AG04450 (cell line): ENCODE measurements at regions of chr18 and their contacts with region 1.

Region 1: GRCh38 chr18:3869848-3870247 is 419.9 kb downstream of the TGIF1 start:
- DNase-seq: peak; percentile 27
- H3K4me3 ChIP-seq: no peak overlapping the region
- H3K27ac ChIP-seq: no peak overlapping the region
- H3K27me3 ChIP-seq: no peaks in the 10 kb centered on the region
- CTCF ChIP-seq: peak; percentile 61

Region 2: GRCh38 chr18:2395427-2396161 is 1474.3 kb before region 1 on chr18:
- CTCF ChIA-PET with region 1: no interaction called
- POLR2A ChIA-PET with region 1: no interaction called
- DNase-seq: no peak
- H3K4me3 ChIP-seq: no peak overlapping the region
- H3K27ac ChIP-seq: no peak overlapping the region
- H3K27me3 ChIP-seq: no peaks in the 10 kb centered on the region
- CTCF ChIP-seq: no peak

Region 3: GRCh38 chr18:3671181-3671580 is 198.7 kb before region 1 on chr18:
- CTCF ChIA-PET with region 1: interaction called, 29 read pairs
- POLR2A ChIA-PET with region 1: no interaction called
- DNase-seq: no peak
- H3K4me3 ChIP-seq: no peak overlapping the region
- H3K27ac ChIP-seq: no peak overlapping the region
- H3K27me3 ChIP-seq: no peaks in the 10 kb centered on the region
- CTCF ChIP-seq: no peak

Region 4: GRCh38 chr18:3688699-3689098 is 181.1 kb before region 1 on chr18:
- CTCF ChIA-PET with region 1: interaction called, 14 read pairs
- POLR2A ChIA-PET with region 1: no interaction called
- DNase-seq: peak; percentile 96
- H3K4me3 ChIP-seq: no peak overlapping the region
- H3K27ac ChIP-seq: peak overlapping the region; percentile 47
- H3K27me3 ChIP-seq: no peaks in the 10 kb centered on the region
- CTCF ChIP-seq: no peak

Region 5: GRCh38 chr18:3703732-3704176 is 166.1 kb before region 1 on chr18:
- CTCF ChIA-PET with region 1: interaction called, 71 read pairs
- POLR2A ChIA-PET with region 1: no interaction called
- DNase-seq: peak; percentile 42
- H3K4me3 ChIP-seq: no peak overlapping the region
- H3K27ac ChIP-seq: peak overlapping the region; percentile 2
- H3K27me3 ChIP-seq: no peaks in the 10 kb centered on the region
- CTCF ChIP-seq: peak; percentile 91

Region 6: GRCh38 chr18:3857544-3857943 is 12.3 kb before region 1 on chr18:
- CTCF ChIA-PET with region 1: interaction called, 15 read pairs
- POLR2A ChIA-PET with region 1: no interaction called
- DNase-seq: no peak
- H3K4me3 ChIP-seq: no peak overlapping the region
- H3K27ac ChIP-seq: no peak overlapping the region
- H3K27me3 ChIP-seq: no peaks in the 10 kb centered on the region
- CTCF ChIP-seq: no peak